ENCODE measurements at regions of chr17 and their contacts with region 1.

Region 1: GRCh38 chr17:6666077-6666521 is 14.5 kb downstream of the C17orf100 start:
- DNase-seq: peak; percentile 72 to 82
- ATAC-seq: peak; percentile 87
- H3K4me3 ChIP-seq: no peak overlapping the region
- H3K27ac ChIP-seq: no peak overlapping the region
- H3K4me1 ChIP-seq: no peaks in the 10 kb centered on the region
- H3K27me3 ChIP-seq: no peaks in the 10 kb centered on the region

Region 2: GRCh38 chr17:6627019-6627418 is 39.1 kb before region 1 on chr17:
- intact Hi-C with region 1: no loop called
- DNase-seq: no peak
- ATAC-seq: no peak
- H3K4me3 ChIP-seq: no peak overlapping the region
- H3K27ac ChIP-seq: no peak overlapping the region
- H3K4me1 ChIP-seq: no peaks in the 10 kb centered on the region
- H3K27me3 ChIP-seq: no peaks in the 10 kb centered on the region

Region 3: DNA sequence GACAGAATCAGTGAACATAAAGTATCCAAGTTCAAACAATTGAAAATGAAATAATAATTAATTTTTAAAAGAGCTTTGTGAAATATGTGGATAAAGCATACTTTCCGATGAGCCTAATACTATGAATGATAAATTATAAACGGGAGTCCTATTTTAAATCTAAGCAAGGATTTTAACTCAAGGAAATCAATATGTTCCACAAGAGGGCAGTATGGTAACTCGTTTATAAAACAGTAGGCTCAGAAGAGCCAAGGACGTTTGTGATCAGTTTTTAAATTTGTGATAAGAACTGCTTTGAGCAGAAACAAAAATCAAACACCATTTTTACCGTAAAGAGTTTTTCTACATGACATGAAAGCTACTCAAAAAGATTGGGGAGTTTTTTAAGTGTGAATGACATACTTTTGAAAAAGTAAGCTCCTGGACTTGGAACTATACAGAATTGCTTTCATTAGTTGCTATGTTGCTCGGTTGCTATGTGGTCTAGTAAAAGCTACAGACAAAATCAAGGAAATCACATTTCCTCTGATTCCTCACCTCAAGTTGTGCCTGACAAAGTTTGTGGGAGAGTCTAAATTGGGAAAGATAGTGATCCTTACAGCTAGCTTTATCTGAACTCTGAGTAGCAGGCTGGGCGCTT is 177.3 kb after region 1 on chr17:
- intact Hi-C with region 1: loop called (anchors 10 kb)
- DNase-seq: no peak
- ATAC-seq: no peak
- H3K4me3 ChIP-seq: no peak overlapping the region
- H3K27ac ChIP-seq: no peak overlapping the region
- H3K4me1 ChIP-seq: no peaks in the 10 kb centered on the region
- H3K27me3 ChIP-seq: no peaks in the 10 kb centered on the region

Region 4: GRCh38 chr17:7004398-7005253 is 338.5 kb after region 1 on chr17:
- intact Hi-C with region 1: loop called (anchors 10 kb)
- DNase-seq: peak in 1 of 2 donors; percentile 47
- ATAC-seq: peak; percentile 74
- H3K4me3 ChIP-seq: no peak overlapping the region
- H3K27ac ChIP-seq: no peak overlapping the region
- H3K4me1 ChIP-seq: no peaks in the 10 kb centered on the region
- H3K27me3 ChIP-seq: no peaks in the 10 kb centered on the region

Measured in aorta (tissue), 5 donors.